ENCODE measurements at regions of chr1 and their contacts with region 1.

Region 1: GRCh38 chr1:235513495-235514366 is 9.5 kb upstream of the B3GALNT2 start:
- DNase-seq: peak in 1 of 2 donors; percentile 83
- ATAC-seq: peak in 2 of 3 donors; percentile 57 to 69
- H3K4me3 ChIP-seq: no peak overlapping the region
- H3K4me3 Mint-ChIP-seq: no peak overlapping the region
- H3K27ac ChIP-seq: no peak overlapping the region
- H3K27ac Mint-ChIP-seq: no peak overlapping the region
- H3K4me1 ChIP-seq: no peaks in the 10 kb centered on the region
- H3K4me1 Mint-ChIP-seq: no peaks in the 10 kb centered on the region
- H3K27me3 ChIP-seq: no peaks in the 10 kb centered on the region
- H3K27me3 Mint-ChIP-seq: peaks cover 7 to 14% of the 10 kb centered on the region in 2 donors
- CTCF ChIP-seq: peak; percentile 87

Region 2: DNA sequence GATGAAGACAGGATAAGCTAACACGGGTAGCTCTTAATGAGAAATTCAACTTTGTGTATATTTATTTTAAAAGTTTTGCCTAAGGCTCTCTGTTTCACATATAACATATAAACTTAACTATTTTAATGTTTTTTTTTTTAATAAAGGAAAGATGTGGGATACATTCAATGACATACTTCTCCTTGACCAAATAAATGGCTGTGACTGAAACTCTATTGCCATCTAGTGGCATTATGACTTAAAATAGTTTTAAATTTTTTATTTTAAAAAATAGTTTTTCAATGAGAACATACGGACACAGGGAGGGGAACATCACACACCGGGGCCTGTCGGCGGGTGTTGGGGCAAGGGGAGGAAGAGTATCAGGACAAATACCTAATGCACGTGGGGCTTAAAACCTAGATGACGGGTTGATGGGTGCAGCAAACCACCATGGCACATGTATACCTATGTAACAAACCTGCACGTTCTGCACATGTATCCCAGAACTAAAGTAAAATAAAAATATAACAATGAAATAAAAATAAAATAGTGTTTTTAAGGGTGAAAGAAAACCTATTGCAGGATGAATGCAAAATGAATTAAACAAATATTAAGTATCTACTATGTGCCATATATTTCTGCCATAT is 269.5 kb after region 1 on chr1:
- intact Hi-C with region 1: loop called (anchors 1 kb)
- DNase-seq: peak in 1 of 2 donors; percentile 44
- ATAC-seq: no peak
- H3K4me3 ChIP-seq: no peak overlapping the region
- H3K4me3 Mint-ChIP-seq: no peak overlapping the region
- H3K27ac ChIP-seq: no peak overlapping the region
- H3K27ac Mint-ChIP-seq: no peak overlapping the region
- H3K4me1 ChIP-seq: no peaks in the 10 kb centered on the region
- H3K4me1 Mint-ChIP-seq: no peaks in the 10 kb centered on the region
- H3K27me3 ChIP-seq: no peaks in the 10 kb centered on the region
- H3K27me3 Mint-ChIP-seq: no peaks in the 10 kb centered on the region
- CTCF ChIP-seq: peak; percentile 58

Measured in natural killer cell (primary cell).